ENCODE measurements at regions of chr4 and their contacts with region 1.

Region 1: DNA sequence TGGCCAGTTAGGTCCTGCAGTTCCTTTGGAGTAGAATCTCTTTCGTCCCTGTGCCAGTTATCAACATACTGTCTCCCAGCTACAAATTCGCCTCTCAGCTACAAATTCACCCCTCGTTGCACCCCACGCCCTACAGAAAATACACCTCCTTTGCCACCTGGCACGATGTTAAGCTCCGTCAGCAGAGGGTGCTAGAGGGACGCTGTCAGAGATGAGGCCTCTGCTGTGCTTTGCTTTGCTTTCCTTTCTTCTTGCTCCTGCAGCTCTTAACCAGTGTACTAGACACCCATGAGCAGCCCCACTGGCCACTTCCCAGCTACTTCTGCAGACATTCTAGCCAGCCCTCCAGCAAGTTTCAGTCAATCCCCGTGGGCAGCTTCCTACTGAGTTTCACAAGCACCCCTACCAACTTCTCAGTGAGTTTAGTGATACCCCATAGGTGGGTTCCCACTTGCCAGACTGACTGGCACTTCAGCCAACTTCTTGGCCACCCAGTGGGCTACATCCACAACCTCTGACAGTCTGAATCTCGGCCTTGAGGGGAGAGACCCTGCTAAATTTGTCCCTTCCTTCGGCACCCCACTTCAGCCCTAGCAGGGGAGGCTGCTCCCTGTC is 21.8 kb downstream of the HAUS3 start:
- DNase-seq: peak; percentile 64 to 87 (median 83)
- ATAC-seq: peak; percentile 99
- H3K4me3 ChIP-seq: no peak overlapping the region
- H3K4me3 Mint-ChIP-seq: no peak overlapping the region
- H3K27ac ChIP-seq: no peak overlapping the region
- H3K27ac Mint-ChIP-seq: no peak overlapping the region
- H3K4me1 ChIP-seq: no peaks in the 10 kb centered on the region
- H3K4me1 Mint-ChIP-seq: peaks cover 4% of the 10 kb centered on the region
- H3K27me3 ChIP-seq: no peaks in the 10 kb centered on the region
- H3K27me3 Mint-ChIP-seq: no peaks in the 10 kb centered on the region
- CTCF ChIP-seq: peak; percentile 90

Region 2: GRCh38 chr4:2186133-2186864 is 33.8 kb before region 1 on chr4:
- CTCF ChIA-PET with region 1: no interaction called
- POLR2A ChIA-PET with region 1: no interaction called
- intact Hi-C with region 1: no loop called
- DNase-seq: peak in 1 of 9 experiments; percentile 16
- ATAC-seq: no peak
- H3K4me3 ChIP-seq: no peak overlapping the region
- H3K4me3 Mint-ChIP-seq: no peak overlapping the region
- H3K27ac ChIP-seq: no peak overlapping the region
- H3K27ac Mint-ChIP-seq: no peak overlapping the region
- H3K4me1 ChIP-seq: no peaks in the 10 kb centered on the region
- H3K4me1 Mint-ChIP-seq: no peaks in the 10 kb centered on the region
- H3K27me3 ChIP-seq: no peaks in the 10 kb centered on the region
- H3K27me3 Mint-ChIP-seq: no peaks in the 10 kb centered on the region
- CTCF ChIP-seq: no peak

Region 3: DNA sequence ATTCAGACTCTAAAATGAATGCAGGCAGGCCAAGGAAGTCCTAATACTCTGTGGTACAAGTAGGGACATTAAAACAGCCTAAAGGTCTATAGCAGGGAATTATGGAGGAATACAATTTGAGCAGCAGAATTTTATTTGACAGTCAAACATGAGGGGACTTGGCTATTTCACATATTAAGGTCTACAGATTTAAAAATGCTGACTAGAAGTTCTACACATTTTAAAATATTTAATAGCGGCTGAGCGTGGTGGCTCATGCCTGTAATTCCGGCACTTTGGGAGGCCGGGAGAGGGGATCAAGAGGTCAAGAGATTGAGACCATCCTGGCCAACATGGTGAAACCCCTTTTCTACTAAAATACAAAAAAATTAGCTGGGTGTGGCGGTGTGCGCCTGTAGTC is 11.0 kb after region 1 on chr4:
- CTCF ChIA-PET with region 1: interaction called, 17 read pairs
- POLR2A ChIA-PET with region 1: no interaction called
- intact Hi-C with region 1: no loop called
- DNase-seq: no peak
- ATAC-seq: no peak
- H3K4me3 ChIP-seq: no peak overlapping the region
- H3K4me3 Mint-ChIP-seq: no peak overlapping the region
- H3K27ac ChIP-seq: no peak overlapping the region
- H3K27ac Mint-ChIP-seq: no peak overlapping the region
- H3K4me1 ChIP-seq: peaks cover 3% of the 10 kb centered on the region
- H3K4me1 Mint-ChIP-seq: peaks cover 28% of the 10 kb centered on the region
- H3K27me3 ChIP-seq: no peaks in the 10 kb centered on the region
- H3K27me3 Mint-ChIP-seq: no peaks in the 10 kb centered on the region
- CTCF ChIP-seq: no peak

Region 4: DNA sequence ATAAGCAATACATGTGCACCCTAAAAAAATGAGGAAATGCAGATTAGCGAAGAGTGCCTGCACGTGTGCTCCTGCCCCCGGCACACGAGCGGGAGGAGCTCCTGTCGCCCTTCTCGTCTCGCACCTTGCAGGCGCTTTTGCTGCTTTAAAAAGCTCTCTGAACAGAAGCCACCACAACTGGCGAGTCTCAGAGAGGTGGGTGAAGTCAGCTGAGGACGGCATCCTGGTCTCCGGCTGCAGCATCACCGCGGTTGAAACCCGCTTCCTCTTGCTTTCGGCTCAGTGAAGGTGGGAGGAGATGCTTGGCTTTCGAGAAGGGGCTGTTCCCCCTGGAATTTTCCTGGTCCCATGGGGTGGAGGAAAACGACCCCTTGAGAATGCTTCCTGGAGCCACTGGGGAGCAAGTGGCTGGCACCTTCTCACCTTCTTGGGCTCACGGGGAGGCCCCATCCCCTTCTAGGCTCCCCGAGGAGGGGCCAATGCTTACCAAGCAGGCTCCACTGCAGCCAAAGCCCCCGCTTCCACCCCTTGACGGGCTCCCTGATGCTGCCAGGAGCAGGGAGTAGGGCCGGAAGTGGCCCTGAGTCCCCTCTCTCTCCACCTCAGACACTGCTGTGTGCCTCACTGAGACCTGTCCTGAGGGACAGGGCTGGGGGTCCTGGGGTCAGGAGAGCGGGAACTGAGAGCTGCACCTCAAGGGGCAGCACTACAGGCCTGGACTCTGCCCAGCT is 71.0 kb after region 1 on chr4:
- CTCF ChIA-PET with region 1: interaction called, 11 read pairs
- POLR2A ChIA-PET with region 1: no interaction called
- intact Hi-C with region 1: no loop called
- DNase-seq: peak in 8 of 9 experiments; percentile 61 to 96 (median 81)
- ATAC-seq: peak; percentile 88
- H3K4me3 ChIP-seq: peak overlapping the region; percentile 19 to 29
- H3K4me3 Mint-ChIP-seq: peak overlapping the region; percentile 64
- H3K27ac ChIP-seq: peak overlapping the region; percentile 80 to 81
- H3K27ac Mint-ChIP-seq: peak overlapping the region; percentile 98
- H3K4me1 ChIP-seq: peaks cover 72% of the 10 kb centered on the region
- H3K4me1 Mint-ChIP-seq: peaks cover 56% of the 10 kb centered on the region
- H3K27me3 ChIP-seq: no peaks in the 10 kb centered on the region
- H3K27me3 Mint-ChIP-seq: no peaks in the 10 kb centered on the region
- CTCF ChIP-seq: no peak

Region 5: GRCh38 chr4:2354118-2354517 is 134.0 kb after region 1 on chr4:
- CTCF ChIA-PET with region 1: interaction called, 77 read pairs
- POLR2A ChIA-PET with region 1: no interaction called
- intact Hi-C with region 1: loop called (anchors 1 kb)
- DNase-seq: peak in 6 of 9 experiments; percentile 35 to 70 (median 53)
- ATAC-seq: peak; percentile 73
- H3K4me3 ChIP-seq: no peak overlapping the region
- H3K4me3 Mint-ChIP-seq: no peak overlapping the region
- H3K27ac ChIP-seq: no peak overlapping the region
- H3K27ac Mint-ChIP-seq: no peak overlapping the region
- H3K4me1 ChIP-seq: peaks cover 15% of the 10 kb centered on the region
- H3K4me1 Mint-ChIP-seq: peaks cover 9% of the 10 kb centered on the region
- H3K27me3 ChIP-seq: no peaks in the 10 kb centered on the region
- H3K27me3 Mint-ChIP-seq: no peaks in the 10 kb centered on the region
- CTCF ChIP-seq: peak; percentile 49

Region 6: DNA sequence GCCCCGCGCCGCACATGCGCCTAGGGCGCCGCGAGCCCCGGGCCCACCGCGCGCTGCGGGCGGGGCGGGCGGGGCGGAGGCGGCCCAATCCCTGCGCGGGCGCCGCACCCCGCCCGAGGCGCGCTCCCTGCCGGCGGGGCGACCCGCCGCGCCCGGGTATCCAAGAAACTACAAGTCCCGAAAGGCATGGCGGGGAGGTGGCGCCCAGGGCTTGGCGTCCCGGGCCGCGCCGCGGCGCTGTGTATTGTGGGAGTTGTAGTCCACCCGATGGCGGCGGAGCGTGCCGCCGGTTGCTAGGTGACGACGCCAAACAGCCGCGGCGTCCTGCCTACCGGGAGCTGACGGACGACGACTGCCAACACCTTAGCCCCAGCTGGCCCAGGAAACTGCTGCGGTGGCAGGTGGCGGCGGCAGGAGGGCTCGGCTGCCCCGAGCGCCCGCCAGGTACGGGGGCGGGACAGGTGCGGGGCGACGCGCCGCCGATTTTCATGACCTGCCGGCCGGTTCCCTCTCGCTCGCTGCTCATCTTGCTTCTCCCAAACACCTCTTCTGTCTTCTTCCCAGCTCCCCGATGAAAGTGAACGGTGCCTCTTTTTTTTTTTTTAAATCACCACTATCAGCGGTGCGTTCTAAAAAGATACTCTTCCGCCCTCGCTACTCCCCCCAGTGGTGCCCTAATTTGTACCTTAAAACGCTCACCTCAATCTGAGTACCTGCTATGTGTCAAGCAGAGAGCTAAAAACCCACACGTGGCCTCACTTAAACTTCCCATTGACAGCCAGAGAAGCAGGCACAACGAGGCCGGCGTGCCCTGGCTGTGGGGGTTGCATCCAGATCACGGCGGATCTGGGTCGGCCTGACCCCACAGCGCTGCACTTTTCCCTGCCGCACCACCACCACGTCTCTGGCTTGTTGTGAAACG is 198.8 kb after region 1 on chr4 and contains the start of gene CFAP99:
- CTCF ChIA-PET with region 1: interaction called, 13 read pairs
- POLR2A ChIA-PET with region 1: no interaction called
- intact Hi-C with region 1: loop called in 1 of 2 experiments (anchors 1 kb)
- DNase-seq: peak; percentile 97 to 99 (median 98)
- ATAC-seq: peak; percentile 87
- H3K4me3 ChIP-seq: peak within 1 kb of the TSS; percentile 52 to 56
- H3K4me3 Mint-ChIP-seq: peak within 1 kb of the TSS; percentile 87
- H3K27ac ChIP-seq: peak within 1 kb of the TSS; percentile 73 to 76
- H3K27ac Mint-ChIP-seq: peak within 1 kb of the TSS; percentile 94
- H3K4me1 ChIP-seq: peaks cover 43% of the 10 kb centered on the region
- H3K4me1 Mint-ChIP-seq: peaks cover 44% of the 10 kb centered on the region
- H3K27me3 ChIP-seq: peaks cover 6 to 10% of the 10 kb centered on the region in 2 experiments
- H3K27me3 Mint-ChIP-seq: peaks cover 14% of the 10 kb centered on the region
- CTCF ChIP-seq: peak; percentile 58
- total RNA-seq, gene CFAP99: 0.22 to 0.36 TPM

Region 7: GRCh38 chr4:2462218-2462991 is 242.3 kb after region 1 on chr4:
- CTCF ChIA-PET with region 1: interaction called, 31 read pairs
- POLR2A ChIA-PET with region 1: interaction called, 4 read pairs
- intact Hi-C with region 1: loop called (anchors 1 kb)
- DNase-seq: peak; percentile 31 to 87 (median 69)
- ATAC-seq: peak; percentile 96
- H3K4me3 ChIP-seq: peak overlapping the region in 1 of 2 experiments; percentile 50
- H3K4me3 Mint-ChIP-seq: peak overlapping the region; percentile 78
- H3K27ac ChIP-seq: no peak overlapping the region
- H3K27ac Mint-ChIP-seq: no peak overlapping the region
- H3K4me1 ChIP-seq: peaks cover 4% of the 10 kb centered on the region
- H3K4me1 Mint-ChIP-seq: peaks cover 10% of the 10 kb centered on the region
- H3K27me3 ChIP-seq: no peaks in the 10 kb centered on the region
- H3K27me3 Mint-ChIP-seq: no peaks in the 10 kb centered on the region
- CTCF ChIP-seq: peak; percentile 57

Region 8: DNA sequence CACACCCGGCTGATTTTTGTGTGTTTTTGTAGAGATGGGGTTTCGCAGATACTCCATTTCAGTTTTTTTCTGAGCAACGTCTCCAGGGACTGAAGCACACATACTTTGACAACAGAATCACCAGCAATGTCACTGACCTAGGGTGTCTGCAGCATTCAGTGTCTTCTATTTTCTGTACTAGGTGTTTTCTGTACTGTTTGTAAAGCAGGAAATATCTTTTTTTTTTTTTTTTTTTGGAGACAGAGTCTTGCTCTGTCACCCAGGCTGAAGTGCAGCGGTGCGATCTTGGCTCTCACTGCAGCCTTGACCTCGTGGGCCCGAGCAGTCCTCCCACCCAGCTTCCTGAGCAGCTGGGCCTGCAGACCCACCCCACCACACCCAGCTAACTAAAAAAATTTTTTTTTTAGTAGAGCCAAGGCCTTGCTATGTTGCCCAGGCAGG is 632.4 kb after region 1 on chr4:
- CTCF ChIA-PET with region 1: no interaction called
- POLR2A ChIA-PET with region 1: no interaction called
- intact Hi-C with region 1: no loop called
- DNase-seq: peak in 2 of 9 experiments; percentile 35 to 56
- ATAC-seq: peak; percentile 72
- H3K4me3 ChIP-seq: no peak overlapping the region
- H3K4me3 Mint-ChIP-seq: peak overlapping the region; percentile 75
- H3K27ac ChIP-seq: peak overlapping the region; percentile 6 to 68
- H3K27ac Mint-ChIP-seq: peak overlapping the region; percentile 92
- H3K4me1 ChIP-seq: peaks cover 60% of the 10 kb centered on the region
- H3K4me1 Mint-ChIP-seq: peaks cover 71% of the 10 kb centered on the region
- H3K27me3 ChIP-seq: no peaks in the 10 kb centered on the region
- H3K27me3 Mint-ChIP-seq: no peaks in the 10 kb centered on the region
- CTCF ChIP-seq: no peak

Measured in CD8-positive, alpha-beta T cell (primary cell).